Right ventricle myocardium inferior (tissue), 1 donor: ENCODE measurements at regions of chr15 and their contacts with region 1.

Region 1: DNA sequence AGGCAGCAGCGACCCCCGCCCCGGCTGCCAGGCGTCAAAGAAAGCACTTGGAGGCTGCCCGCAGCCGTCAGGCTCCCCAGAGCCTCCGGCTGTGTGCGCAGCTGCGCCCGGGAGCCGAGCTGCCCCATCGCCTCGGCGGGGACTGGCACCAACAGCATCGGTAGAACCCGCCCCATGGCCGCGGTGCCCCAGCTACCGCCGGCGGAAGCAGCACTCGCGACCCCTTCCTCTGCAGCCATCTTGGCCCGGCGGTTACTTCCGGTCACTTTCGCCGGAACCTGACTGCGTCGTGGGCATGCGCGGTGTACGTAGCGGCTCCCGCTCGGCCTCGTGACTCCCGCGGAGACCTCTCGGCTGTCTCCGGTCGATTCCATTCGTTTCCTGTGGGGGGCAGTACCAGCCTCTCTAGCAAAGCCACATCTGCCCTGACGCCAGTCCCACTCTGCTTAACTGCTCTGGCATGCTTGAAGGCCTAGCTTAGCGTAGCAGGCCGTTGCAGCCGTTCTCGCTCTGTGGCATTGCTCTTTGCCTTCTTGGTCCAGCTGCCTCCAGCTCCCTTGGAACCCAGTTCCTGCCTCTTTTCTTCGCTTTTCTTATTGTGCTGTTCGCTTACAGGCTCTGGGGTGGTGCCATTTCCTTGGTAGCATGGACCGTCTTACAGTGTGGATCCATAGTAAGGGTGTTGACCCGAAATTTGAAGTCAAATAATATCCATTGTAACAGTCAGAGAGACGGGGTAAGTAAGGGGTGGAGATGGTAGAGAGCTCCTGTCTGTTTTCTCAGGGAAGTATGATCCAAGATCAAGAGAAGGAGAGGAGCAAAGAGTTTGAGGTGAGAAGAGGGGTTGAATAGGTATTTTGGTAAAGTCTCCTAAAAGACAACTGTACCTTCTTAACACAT is at the start of gene SPG11:
- DNase-seq: peak; percentile 99
- ATAC-seq: peak; percentile 99
- total RNA-seq, gene SPG11: 40.5 TPM

Region 2: GRCh38 chr15:44711356-44712107 is 47.9 kb after region 1 on chr15 and contains the start of gene B2M:
- intact Hi-C with region 1: loop called (anchors 1 kb)
- DNase-seq: peak; percentile 98
- ATAC-seq: peak; percentile 96
- total RNA-seq, gene B2M: 1,155 TPM

Region 3: DNA sequence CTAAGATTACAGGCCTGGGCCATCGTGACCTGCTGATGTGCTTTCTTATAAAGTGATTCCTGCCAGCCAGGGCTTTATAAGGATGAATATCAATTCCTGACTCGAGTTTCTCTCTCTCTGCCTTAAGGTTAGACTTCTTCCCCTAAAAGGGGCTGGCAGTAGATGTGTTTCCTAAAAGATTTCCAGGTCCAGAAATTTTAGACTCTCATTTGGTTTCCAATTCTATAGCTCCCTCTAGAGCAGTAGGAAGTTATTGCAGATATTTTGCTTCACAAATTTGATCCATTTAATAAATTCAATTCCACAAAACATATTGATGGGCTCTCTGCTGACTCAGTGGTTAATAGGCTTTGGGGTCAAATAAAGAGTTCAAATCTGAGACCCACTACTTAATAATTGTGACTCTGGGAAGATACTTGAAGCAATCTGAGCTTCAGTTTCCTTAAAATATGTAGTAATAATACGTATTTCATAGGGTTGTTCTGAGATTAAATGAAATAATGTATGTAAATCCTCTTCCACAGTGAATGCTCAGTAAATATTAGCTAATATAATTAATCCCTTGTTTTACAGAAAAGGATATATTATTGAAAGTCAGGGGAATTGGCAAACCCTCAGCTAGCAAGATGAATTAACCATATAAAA is 74.8 kb after region 1 on chr15:
- intact Hi-C with region 1: loop called (anchors 1 kb)
- DNase-seq: no peak
- ATAC-seq: peak; percentile 31